K562 (cell line): ENCODE measurements at regions of chr3 and their contacts with region 1.

Region 1: GRCh38 chr3:136617198-136617597 is 135.0 kb downstream of the STAG1 start:
- DNase-seq: peak in 2 of 4 experiments; percentile 35 to 50
- ATAC-seq: peak; percentile 92
- H3K4me3 ChIP-seq: no peak overlapping the region
- H3K27ac ChIP-seq: peak overlapping the region; percentile 63
- H3K4me1 ChIP-seq: peaks cover 3 to 12% of the 10 kb centered on the region in 2 experiments; a peak in 3 of 5 replicates
- H3K27me3 ChIP-seq: no peaks in the 10 kb centered on the region
- CTCF ChIP-seq: peak in 2 of 3 experiments; percentile 23 to 40; a peak in 2 of 6 replicates
- EP300 ChIP-seq: no peak
- POLR2A ChIP-seq: no peak
- RAD21 ChIP-seq: peak; percentile 14 to 68; a peak in 2 of 4 replicates

Region 2: GRCh38 chr3:136390574-136390973 is 226.6 kb before region 1 on chr3:
- CTCF ChIA-PET with region 1: no interaction called
- POLR2A ChIA-PET with region 1: no interaction called
- in situ Hi-C with region 1: no loop called
- intact Hi-C with region 1: loop called (anchors 5 kb)
- DNase-seq: no peak
- ATAC-seq: no peak
- H3K4me3 ChIP-seq: no peak overlapping the region
- H3K27ac ChIP-seq: no peak overlapping the region
- H3K4me1 ChIP-seq: no peaks in the 10 kb centered on the region
- H3K27me3 ChIP-seq: no peaks in the 10 kb centered on the region
- CTCF ChIP-seq: no peak
- EP300 ChIP-seq: no peak
- POLR2A ChIP-seq: no peak
- RAD21 ChIP-seq: no peak